Psoas muscle (tissue), 8 donors: ENCODE measurements at regions of chr1 and their contacts with region 1.

Region 1: DNA sequence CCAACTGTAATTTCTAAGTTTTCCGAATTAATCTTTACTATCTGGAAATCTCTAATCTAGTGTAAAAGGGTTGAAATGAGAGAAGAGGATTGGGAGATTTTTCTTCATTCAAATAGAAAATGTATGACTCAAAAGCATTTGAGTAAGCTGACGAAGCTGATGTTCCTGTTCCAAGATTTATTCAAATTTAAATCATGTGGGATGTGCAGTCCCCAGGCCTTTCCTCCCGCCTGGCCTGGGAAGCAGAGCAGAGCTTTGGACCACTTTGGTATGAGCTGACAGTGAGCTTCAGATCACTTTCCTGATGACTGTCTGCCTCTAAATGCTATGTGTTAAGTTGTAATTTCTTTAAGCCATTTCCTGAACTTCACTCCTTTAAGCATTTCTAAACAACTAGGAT is 192.0 kb downstream of the DHRS3 start:
- DNase-seq: no peak
- ATAC-seq: no peak
- H3K4me3 ChIP-seq: no peak overlapping the region
- H3K27ac ChIP-seq: no peak overlapping the region
- H3K4me1 ChIP-seq: peaks cover 22% of the 10 kb centered on the region
- H3K27me3 ChIP-seq: no peaks in the 10 kb centered on the region
- CTCF ChIP-seq: no peak

Region 2: DNA sequence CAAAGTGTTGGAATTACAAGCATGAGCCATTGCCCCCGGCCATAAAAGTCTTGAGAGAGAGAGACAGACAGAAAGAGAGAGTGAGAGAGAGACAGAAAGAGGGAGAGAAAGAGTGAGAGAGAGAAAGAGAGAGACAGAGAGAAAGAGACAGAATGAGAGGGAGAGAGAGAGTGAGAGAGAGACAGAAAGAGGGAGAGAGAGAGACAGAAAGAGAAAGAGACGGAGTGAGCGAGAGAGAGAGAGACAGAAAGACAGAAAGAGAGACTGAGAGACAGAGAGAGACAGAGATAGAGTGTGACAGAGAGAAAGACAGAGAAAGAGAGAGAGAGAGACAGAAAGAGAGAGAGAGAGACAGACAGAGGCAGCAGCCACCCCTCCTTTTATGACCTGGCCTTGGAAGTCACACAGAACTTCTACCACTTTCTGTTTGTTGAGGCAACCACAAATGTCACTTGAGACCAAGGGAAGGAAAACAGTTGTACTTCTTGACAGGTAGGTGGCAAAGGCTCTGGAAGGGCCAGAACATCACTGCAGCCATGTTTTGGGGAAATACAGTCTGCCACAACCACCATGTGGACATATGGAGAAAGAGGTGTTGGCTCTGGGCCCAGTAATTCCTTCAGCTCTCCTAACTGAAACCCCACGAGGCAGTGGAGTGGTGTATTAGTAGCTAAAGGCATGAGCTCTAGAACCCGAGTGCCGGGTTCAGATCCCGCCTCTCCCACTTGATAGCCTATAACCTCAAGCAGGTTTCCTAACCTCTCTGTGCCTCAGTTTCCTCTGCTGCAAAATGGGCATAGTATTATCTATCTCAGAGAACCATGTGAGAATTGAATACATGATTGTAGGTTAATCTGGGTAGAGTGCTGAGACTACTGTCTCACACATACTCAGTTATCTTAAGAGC is 312.3 kb before region 1 on chr1:
- intact Hi-C with region 1: no loop called
- DNase-seq: no peak
- ATAC-seq: no peak
- H3K4me3 ChIP-seq: no peak overlapping the region
- H3K27ac ChIP-seq: no peak overlapping the region
- H3K4me1 ChIP-seq: no peaks in the 10 kb centered on the region
- H3K27me3 ChIP-seq: no peaks in the 10 kb centered on the region
- CTCF ChIP-seq: no peak

Region 3: GRCh38 chr1:12464598-12465056 is 38.6 kb after region 1 on chr1:
- intact Hi-C with region 1: loop called in 1 of 2 experiments (anchors 5 kb)
- DNase-seq: peak in 1 of 2 donors; percentile 53
- ATAC-seq: peak; percentile 87 to 94 (median 88)
- H3K4me3 ChIP-seq: no peak overlapping the region
- H3K27ac ChIP-seq: peak overlapping the region; percentile 74
- H3K4me1 ChIP-seq: peaks cover 64% of the 10 kb centered on the region
- H3K27me3 ChIP-seq: no peaks in the 10 kb centered on the region
- CTCF ChIP-seq: no peak